Activated B cell treated with CpG ODN at 0.5 μM for 24 hours (primary cell): ENCODE measurements at regions of chr11 and their contacts with region 1.

Region 1: DNA sequence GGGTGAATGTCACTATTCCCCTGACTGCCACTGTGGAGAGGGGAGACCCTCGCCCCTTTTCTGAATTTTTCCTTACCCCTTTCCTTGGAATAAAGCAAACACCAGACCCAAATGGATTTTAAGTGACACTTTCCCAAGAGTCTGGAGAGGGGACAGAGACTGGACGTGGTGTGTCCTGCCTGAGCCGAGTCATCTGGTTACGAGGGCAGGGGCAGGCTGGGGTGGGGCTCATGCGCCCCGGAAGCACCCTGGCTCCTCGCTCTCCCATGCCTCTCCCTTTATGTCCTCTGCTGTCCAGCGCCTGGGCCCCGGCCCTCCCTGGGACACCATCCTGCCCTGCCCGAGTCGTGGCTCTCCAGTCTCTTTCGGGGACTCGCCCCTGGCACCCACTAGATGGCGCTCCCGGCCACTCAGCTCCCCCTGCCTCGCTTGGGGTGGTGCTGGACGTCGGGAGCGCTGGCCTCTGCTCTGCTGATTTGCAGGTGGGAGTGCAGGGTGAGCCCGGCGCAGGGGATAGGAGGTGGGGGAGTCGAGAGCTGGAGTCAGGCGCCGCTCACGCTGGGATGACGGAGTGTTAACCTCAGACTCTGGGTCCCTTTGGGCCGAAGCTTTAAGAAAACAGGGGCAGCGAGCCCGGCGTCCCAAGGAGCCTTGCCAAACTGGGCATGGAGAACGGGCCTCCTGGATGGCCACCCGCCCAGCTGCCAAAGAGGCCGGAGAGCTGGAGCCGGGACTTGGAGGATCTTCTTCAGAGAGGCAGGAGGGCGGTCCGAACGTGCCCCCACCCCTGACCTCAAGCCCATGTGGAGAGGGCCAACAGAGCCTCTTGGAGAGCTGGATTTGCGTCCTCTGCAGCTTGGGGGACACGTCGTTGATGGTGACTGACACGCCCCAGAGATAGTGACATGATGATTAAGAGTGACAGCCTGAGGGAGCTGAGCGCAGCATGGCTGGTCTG is 89.9 kb downstream of the RPS6KA4 start:
- DNase-seq: peak; percentile 71
- ATAC-seq: peak; percentile 59
- H3K4me3 Mint-ChIP-seq: peak overlapping the region; percentile 87
- H3K27ac Mint-ChIP-seq: peak overlapping the region; percentile 73
- H3K4me1 Mint-ChIP-seq: peaks cover 35% of the 10 kb centered on the region
- H3K27me3 Mint-ChIP-seq: peaks cover 2% of the 10 kb centered on the region
- CTCF ChIP-seq: no peak

Region 2: DNA sequence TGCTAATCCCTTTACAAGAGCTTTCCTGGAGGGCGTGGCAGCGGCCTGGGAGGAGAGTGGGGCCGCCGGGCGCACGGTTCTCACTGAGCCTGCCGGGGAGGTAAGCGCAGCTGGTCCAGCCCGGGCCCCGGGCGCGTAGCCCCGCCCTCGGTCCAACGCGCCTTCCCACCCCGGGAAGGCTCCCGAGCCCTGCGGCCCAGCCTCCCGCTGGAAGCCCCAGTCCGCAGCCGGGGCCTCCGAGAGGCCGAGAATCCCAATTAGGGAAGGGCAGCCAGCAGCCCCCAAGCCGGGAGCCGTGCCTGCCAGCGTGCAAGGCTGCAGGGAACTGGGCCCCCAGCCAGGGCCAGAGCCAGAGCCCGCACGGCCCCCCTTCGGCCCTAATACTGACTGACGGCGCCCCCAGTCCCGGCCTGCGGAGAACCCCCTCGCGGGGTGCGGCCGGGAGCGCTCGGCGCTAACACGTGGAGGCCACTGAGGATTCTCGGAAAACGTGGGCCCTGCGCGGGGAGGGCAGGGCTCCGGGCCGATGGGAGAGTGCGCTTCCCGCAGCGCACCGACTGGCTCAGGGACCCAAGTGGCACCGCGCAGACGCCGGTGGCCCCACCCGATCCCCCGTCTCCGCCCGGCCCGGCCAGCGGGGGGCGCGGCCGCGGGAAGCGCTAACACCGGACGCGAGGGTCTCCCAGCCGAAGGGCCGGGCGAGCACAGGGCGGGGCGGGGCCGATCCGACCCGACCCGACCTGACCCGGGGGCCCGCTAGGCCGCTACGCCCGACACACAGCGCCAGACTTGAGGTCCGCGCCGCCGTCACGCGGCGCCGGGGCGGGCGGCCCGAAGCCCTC is 686.0 kb before region 1 on chr11:
- CTCF ChIA-PET with region 1: no interaction called
- POLR2A ChIA-PET with region 1: no interaction called
- intact Hi-C with region 1: no loop called
- DNase-seq: no peak
- ATAC-seq: no peak
- H3K4me3 Mint-ChIP-seq: no peak overlapping the region
- H3K27ac Mint-ChIP-seq: no peak overlapping the region
- H3K4me1 Mint-ChIP-seq: peaks cover 7% of the 10 kb centered on the region
- H3K27me3 Mint-ChIP-seq: no peaks in the 10 kb centered on the region
- CTCF ChIP-seq: no peak

Region 3: DNA sequence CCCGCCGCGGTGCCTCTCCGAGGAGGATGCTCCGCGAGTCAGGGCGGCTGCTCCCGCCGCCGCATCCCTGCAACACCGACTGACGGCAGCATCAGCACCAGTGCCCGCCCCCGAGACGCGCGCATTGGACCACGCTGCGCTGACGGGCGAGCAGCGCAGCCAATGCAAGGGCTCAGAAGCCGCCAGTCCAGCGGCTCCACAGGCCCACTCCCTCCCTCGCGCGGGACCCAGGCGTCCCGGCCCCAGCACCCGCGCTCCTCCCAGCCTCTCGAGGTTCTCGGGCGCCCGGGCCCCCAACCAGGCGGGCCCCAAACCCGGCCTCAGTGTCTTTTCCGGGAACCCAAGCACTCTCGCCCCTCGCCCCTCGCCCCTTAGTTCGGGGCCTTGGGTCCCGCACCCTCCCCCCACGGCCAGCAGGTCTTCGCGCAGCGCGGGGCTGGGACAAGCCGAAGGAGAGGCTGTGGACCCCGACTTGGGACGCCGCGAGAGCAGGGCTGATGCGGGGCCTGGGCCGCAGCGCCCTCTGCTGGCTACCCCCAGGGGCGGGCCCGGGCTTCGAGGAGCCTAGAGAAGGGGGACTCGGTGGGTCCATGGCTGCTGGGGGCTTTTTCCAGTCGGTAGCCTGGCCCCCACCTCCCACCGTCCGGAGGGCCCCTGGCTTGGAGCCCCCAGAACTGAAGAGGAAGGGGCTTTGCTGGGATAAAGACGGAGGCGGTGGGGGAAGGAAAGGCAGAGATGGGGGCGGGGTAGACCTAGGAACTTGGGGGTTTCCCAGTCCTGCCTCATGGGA is 274.4 kb after region 1 on chr11 and contains the start of gene NRXN2:
- CTCF ChIA-PET with region 1: no interaction called
- POLR2A ChIA-PET with region 1: no interaction called
- intact Hi-C with region 1: loop called (anchors 2 kb)
- DNase-seq: peak; percentile 88
- ATAC-seq: peak; percentile 89
- H3K4me3 Mint-ChIP-seq: peak within 1 kb of the TSS; percentile 81
- H3K27ac Mint-ChIP-seq: peak within 1 kb of the TSS; percentile 76
- H3K4me1 Mint-ChIP-seq: peaks cover 22% of the 10 kb centered on the region
- H3K27me3 Mint-ChIP-seq: peaks cover 30% of the 10 kb centered on the region
- CTCF ChIP-seq: peak; percentile 64
- total RNA-seq, gene NRXN2: 0.54 and 0.73 TPM in 2 replicates